Activated CD4-positive, alpha-beta T cell treated with anti-CD3 and anti-CD28 coated beads for 36 hours (primary cell): ENCODE measurements at regions of chr10 and their contacts with region 1.

Region 1: GRCh38 chr10:44857363-44858016 is 53.6 kb upstream of the TMEM72 start:
- DNase-seq: peak; percentile 78
- ATAC-seq: peak; percentile 93
- H3K4me3 Mint-ChIP-seq: no peak overlapping the region
- H3K27ac Mint-ChIP-seq: no peak overlapping the region
- H3K4me1 Mint-ChIP-seq: no peaks in the 10 kb centered on the region
- H3K27me3 Mint-ChIP-seq: peaks cover 5% of the 10 kb centered on the region

Region 2: DNA sequence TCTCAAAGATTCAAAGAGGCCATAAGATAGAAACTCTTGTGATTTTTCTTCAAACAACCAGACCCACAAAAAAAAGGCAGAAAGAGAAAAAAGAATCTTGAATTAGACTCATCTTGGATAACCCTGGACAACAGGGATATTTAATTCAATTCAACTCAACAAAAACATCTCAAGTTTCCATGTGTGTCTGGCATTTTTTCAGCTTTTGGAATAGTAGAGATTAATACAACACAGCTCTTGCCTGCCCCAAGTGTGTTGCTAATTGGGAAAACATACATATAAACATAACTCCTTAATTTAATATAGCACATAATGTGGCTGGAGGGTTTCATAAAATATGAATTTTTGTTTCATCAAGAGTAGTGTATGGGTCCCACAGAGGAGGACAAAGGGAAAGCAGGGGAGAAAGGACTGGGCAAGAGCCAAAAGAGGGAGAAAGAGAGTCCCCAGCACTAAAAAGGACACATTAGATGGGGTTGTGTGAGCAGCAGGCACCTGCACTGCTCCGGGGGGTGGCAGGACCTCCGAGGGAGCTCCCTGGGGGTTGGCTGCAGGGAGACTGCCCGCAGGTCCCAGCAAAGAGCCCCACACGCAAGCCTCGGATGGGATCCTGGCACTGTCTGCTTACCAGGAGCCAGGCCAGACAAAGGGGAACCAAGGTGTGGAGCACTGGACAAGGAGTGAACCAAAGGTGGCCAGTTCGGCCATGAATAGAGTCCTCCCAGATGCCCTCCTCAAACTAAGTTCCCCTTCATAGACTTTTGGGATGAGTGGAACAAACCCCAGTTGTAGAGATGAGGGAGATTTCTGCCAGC is 11.9 kb before region 1 on chr10:
- CTCF ChIA-PET with region 1: interaction called, 13 read pairs
- POLR2A ChIA-PET with region 1: no interaction called
- intact Hi-C with region 1: no loop called
- DNase-seq: no peak
- ATAC-seq: no peak
- H3K4me3 Mint-ChIP-seq: no peak overlapping the region
- H3K27ac Mint-ChIP-seq: no peak overlapping the region
- H3K4me1 Mint-ChIP-seq: no peaks in the 10 kb centered on the region
- H3K27me3 Mint-ChIP-seq: peaks cover 4% of the 10 kb centered on the region

Region 3: GRCh38 chr10:44947371-44948152 is 90.1 kb after region 1 on chr10:
- CTCF ChIA-PET with region 1: no interaction called
- POLR2A ChIA-PET with region 1: no interaction called
- intact Hi-C with region 1: no loop called
- DNase-seq: no peak
- ATAC-seq: no peak
- H3K4me3 Mint-ChIP-seq: no peak overlapping the region
- H3K27ac Mint-ChIP-seq: no peak overlapping the region
- H3K4me1 Mint-ChIP-seq: peaks cover 2% of the 10 kb centered on the region
- H3K27me3 Mint-ChIP-seq: peaks cover 9% of the 10 kb centered on the region